IMR-90 (cell line): ENCODE measurements at regions of chr6 and their contacts with region 1.

Region 1: GRCh38 chr6:52653151-52653550 is 17.8 kb upstream of the TMEM14A start:
- DNase-seq: no peak
- ATAC-seq: no peak
- H3K4me3 ChIP-seq: no peak overlapping the region
- H3K27ac ChIP-seq: no peak overlapping the region
- H3K4me1 ChIP-seq: peaks cover 2% of the 10 kb centered on the region; the same call in 1 of the 2 replicates
- H3K27me3 ChIP-seq: no peaks in the 10 kb centered on the region; the same call in 1 of the 2 replicates
- CTCF ChIP-seq: no peak
- POLR2A ChIP-seq: no peak
- RAD21 ChIP-seq: no peak

Region 2: DNA sequence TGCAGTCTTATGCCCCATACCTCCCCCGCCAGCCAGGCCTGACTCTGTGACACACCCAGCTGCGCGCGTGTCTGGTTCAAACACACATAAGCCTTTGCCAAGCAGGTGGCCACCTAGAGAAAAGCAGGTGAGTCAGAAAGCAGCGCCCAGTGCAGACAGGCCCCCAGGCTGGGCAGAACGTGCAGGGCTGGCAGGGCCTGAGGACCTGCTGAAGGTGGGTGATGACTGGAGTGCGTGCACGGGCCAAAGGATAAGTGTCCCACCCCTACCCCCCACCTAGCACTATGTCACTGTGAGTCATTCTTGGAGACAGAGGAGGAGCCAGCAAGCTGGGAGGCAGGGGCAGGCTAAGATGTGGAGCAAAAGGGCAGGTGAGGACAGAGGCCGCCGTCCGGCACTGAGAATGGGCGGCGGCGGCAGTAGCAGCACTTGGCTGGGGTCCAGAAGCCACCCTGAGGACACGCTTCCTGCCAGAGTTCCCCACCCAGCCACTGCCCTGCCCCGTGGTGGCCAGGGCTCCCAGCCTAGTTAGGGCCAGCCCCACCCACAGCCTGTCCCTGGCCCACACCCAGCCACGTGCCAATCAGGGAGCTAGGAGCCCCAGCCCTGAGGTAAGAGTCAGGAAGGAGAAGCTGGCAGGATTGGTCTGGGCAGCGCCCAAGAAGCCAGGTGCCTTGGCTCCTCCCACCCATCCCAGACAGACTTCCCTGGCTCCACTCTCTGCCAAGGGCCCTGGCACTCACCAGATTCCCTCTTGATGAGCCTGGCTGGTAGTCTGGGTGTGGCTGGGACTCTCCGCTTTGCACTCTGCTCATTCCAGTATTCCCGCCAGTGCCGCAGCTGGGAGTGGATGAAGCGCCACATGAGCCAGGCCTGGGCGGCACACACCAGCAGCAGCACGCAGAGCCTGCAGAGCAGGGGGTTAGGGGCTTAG is 149.0 kb before region 1 on chr6:
- CTCF ChIA-PET with region 1: no interaction called
- POLR2A ChIA-PET with region 1: no interaction called
- dilution Hi-C with region 1: no loop called
- in situ Hi-C with region 1: no loop called
- intact Hi-C with region 1: no loop called
- DNase-seq: peak; percentile 72
- ATAC-seq: peak; percentile 53; the same call in 1 of the 2 replicates
- H3K4me3 ChIP-seq: no peak overlapping the region
- H3K27ac ChIP-seq: peak overlapping the region; percentile 15; the same call in 1 of the 2 replicates
- H3K4me1 ChIP-seq: peaks cover 36% of the 10 kb centered on the region
- H3K27me3 ChIP-seq: no peaks in the 10 kb centered on the region
- CTCF ChIP-seq: no peak
- POLR2A ChIP-seq: no peak
- RAD21 ChIP-seq: no peak

Region 3: GRCh38 chr6:52640170-52640569 is 13.0 kb before region 1 on chr6:
- CTCF ChIA-PET with region 1: interaction called, 14 read pairs
- POLR2A ChIA-PET with region 1: no interaction called
- dilution Hi-C with region 1: no loop called
- in situ Hi-C with region 1: no loop called
- intact Hi-C with region 1: no loop called
- DNase-seq: peak; percentile 87
- ATAC-seq: peak; percentile 81
- H3K4me3 ChIP-seq: no peak overlapping the region
- H3K27ac ChIP-seq: no peak overlapping the region
- H3K4me1 ChIP-seq: peaks cover 2% of the 10 kb centered on the region; the same call in 1 of the 2 replicates
- H3K27me3 ChIP-seq: no peaks in the 10 kb centered on the region
- CTCF ChIP-seq: no peak
- POLR2A ChIP-seq: no peak
- RAD21 ChIP-seq: no peak